ENCODE measurements at regions of chr3 and their contacts with region 1.

Region 1: GRCh38 chr3:149936812-149937233 is 33.9 kb downstream of the PFN2 start:
- DNase-seq: peak; percentile 7 to 64 (median 32)
- ATAC-seq: peak; percentile 46
- H3K4me3 ChIP-seq: no peak overlapping the region
- H3K4me3 Mint-ChIP-seq: no peak overlapping the region
- H3K27ac ChIP-seq: no peak overlapping the region
- H3K27ac Mint-ChIP-seq: no peak overlapping the region
- H3K4me1 ChIP-seq: no peaks in the 10 kb centered on the region
- H3K4me1 Mint-ChIP-seq: peaks cover 24% of the 10 kb centered on the region
- H3K27me3 ChIP-seq: no peaks in the 10 kb centered on the region
- H3K27me3 Mint-ChIP-seq: no peaks in the 10 kb centered on the region
- CTCF ChIP-seq: peak; percentile 65

Region 2: DNA sequence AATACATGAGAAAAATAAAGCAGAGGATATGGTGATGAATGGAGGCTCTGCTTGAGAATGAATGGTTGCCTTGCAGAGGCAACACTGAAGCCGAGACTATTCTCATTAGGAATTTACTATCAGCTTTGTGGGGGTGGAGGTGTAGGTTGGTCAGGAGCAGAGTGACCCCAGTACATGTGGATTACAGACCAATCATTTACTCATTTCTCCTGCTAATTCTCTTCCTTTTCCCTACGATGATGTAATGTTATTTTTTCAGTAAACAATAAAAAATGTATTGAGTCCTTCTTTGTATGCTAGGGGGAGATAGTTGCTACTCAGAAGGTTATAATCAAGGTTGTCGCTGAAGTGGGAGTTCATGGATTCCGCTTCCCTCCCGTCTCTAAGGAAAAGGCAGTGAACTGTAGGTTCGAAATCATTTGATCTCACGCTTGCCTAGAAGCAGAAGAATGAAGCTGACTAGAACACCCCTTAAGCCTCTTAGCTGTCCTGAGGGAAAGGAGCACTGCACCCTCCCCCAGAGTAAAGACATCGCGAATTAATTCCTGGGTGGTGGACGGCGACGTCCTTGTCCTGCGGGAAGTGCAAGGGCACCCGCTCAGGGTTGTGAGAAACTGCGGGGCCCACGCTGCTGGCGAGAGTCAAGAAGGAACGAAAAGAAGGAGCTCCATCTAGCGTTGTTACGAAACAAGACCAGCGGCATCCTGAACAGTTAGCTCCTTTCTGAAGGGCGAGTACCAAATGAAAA is 247.0 kb after region 1 on chr3:
- CTCF ChIA-PET with region 1: interaction called, 13 read pairs
- POLR2A ChIA-PET with region 1: no interaction called
- intact Hi-C with region 1: loop called (anchors 1 to 10 kb)
- DNase-seq: peak in 8 of 9 experiments; percentile 12 to 67 (median 40)
- ATAC-seq: peak; percentile 69
- H3K4me3 ChIP-seq: no peak overlapping the region
- H3K4me3 Mint-ChIP-seq: no peak overlapping the region
- H3K27ac ChIP-seq: no peak overlapping the region
- H3K27ac Mint-ChIP-seq: no peak overlapping the region
- H3K4me1 ChIP-seq: no peaks in the 10 kb centered on the region
- H3K4me1 Mint-ChIP-seq: no peaks in the 10 kb centered on the region
- H3K27me3 ChIP-seq: no peaks in the 10 kb centered on the region
- H3K27me3 Mint-ChIP-seq: peaks cover 8% of the 10 kb centered on the region
- CTCF ChIP-seq: peak; percentile 31

Region 3: DNA sequence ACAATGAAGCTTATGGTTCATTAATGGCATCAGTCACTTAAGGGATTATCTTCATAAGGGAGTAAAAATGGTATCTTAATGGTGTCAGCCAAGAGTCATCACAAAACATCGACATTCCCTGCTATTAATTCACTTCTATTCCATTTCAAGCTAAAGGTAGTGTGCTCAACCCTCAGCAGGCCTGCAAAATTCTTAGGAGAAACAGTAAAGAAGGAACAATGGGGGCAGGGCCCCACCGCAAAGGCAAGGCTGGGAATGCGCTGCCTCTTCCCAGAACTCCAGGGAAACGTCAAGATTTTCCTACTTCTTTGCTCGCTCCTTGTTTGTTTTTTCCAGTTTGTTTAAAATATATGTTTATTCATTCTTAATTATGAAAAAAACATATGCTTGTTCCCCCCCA is 284.0 kb after region 1 on chr3:
- CTCF ChIA-PET with region 1: interaction called, 6 read pairs
- POLR2A ChIA-PET with region 1: no interaction called
- intact Hi-C with region 1: loop called (anchors 1 to 2 kb)
- DNase-seq: no peak
- ATAC-seq: no peak
- H3K4me3 ChIP-seq: no peak overlapping the region
- H3K4me3 Mint-ChIP-seq: no peak overlapping the region
- H3K27ac ChIP-seq: no peak overlapping the region
- H3K27ac Mint-ChIP-seq: no peak overlapping the region
- H3K4me1 ChIP-seq: peaks cover 5% of the 10 kb centered on the region
- H3K4me1 Mint-ChIP-seq: peaks cover 6% of the 10 kb centered on the region
- H3K27me3 ChIP-seq: peaks cover 5 to 10% of the 10 kb centered on the region in 2 experiments
- H3K27me3 Mint-ChIP-seq: peaks cover 45% of the 10 kb centered on the region
- CTCF ChIP-seq: no peak